Activated CD4-positive, alpha-beta T cell treated with anti-CD3 and anti-CD28 coated beads for 36 hours (primary cell): ENCODE measurements at regions of chr2 and their contacts with region 1.

Region 1: DNA sequence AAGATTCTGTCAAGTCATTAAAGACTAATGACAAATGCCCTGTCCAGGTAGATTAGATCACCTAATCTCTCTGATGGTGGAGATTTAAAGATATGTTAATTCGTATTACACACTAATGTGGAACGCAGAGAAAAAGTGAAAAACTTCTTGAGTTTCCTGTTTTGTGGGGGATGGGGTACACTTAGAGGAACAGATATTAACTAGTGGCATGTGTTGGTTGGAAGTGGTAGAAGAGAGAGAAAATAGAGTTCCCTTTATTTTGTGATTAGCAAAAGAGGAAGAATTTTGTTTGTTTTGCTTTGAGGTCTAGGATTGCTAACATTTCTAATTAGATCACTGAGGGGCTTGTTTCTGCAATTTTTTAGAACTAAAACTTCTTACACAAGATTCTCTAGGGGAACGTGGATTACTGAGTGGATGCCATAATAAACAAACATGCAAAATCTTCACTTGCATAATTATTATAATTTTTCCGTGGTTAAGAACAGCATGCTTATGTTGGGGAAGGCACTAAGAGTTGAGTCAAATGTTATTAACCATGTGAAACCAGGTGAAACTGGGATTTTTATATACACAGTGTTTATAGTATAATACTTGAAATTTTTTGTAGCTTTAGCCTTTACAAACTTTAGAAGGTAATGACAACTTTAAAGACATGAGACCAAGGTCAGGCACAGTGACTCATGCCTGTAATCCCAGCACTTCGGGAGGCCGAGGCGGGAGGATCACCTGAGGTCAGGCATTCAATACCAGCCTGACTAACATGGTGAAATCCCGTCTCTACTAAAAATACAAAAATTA is 97.4 kb upstream of the STK17B start:
- DNase-seq: peak; percentile 46
- ATAC-seq: peak; percentile 37
- H3K4me3 Mint-ChIP-seq: peak overlapping the region; percentile 50
- H3K27ac Mint-ChIP-seq: peak overlapping the region; percentile 89
- H3K4me1 Mint-ChIP-seq: peaks cover 75% of the 10 kb centered on the region
- H3K27me3 Mint-ChIP-seq: no peaks in the 10 kb centered on the region

Region 2: DNA sequence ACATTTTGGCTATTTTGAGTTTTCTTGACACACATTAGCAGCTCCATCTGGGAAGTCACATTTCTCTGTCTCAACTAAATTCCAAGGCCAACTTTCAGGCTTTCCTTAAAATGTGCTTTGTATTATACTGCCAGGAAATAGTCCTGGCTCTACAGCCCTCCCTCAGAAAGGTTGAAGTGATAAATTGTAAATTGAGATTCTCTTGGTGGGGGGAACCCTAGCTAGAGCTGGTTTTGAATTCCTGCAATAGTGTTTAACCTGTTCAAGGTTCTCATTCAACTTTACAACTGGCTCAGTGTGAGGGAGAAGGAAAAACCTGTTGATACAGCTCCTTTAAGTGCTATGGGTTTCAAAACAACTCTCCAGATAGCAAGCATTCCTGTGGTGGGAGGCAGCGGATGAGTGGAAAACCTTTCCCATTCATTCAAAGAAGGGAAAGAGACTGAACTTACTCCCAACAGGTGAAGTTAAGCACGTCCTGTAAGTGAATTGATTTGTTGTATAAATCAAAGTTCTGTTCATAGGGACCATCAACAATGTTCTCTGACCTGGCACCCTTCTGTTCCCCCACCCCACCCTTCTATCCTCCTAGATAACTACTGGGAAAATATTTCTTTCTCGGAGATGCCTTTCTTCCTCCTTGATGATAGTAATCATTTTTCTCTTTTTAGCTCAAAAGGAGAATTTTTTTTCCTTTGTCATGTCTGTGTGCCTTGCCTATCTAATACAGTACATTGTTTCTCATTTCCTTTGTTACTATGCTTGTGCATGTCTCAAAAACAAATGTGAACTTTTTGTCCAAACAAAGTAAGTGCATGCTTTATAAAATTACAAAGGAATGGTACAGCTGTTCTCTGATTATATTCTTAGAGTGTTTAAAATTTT is 655.9 kb before region 1 on chr2:
- CTCF ChIA-PET with region 1: no interaction called
- POLR2A ChIA-PET with region 1: no interaction called
- intact Hi-C with region 1: no loop called
- DNase-seq: no peak
- ATAC-seq: no peak
- H3K4me3 Mint-ChIP-seq: no peak overlapping the region
- H3K27ac Mint-ChIP-seq: no peak overlapping the region
- H3K4me1 Mint-ChIP-seq: peaks cover 19% of the 10 kb centered on the region
- H3K27me3 Mint-ChIP-seq: no peaks in the 10 kb centered on the region

Region 3: GRCh38 chr2:196200557-196200956 is 68.2 kb before region 1 on chr2:
- CTCF ChIA-PET with region 1: no interaction called
- POLR2A ChIA-PET with region 1: no interaction called
- intact Hi-C with region 1: loop called (anchors 2 kb)
- DNase-seq: peak; percentile 65
- ATAC-seq: peak; percentile 92
- H3K4me3 Mint-ChIP-seq: peak overlapping the region; percentile 47
- H3K27ac Mint-ChIP-seq: peak overlapping the region; percentile 90
- H3K4me1 Mint-ChIP-seq: peaks cover 49% of the 10 kb centered on the region
- H3K27me3 Mint-ChIP-seq: no peaks in the 10 kb centered on the region

Region 4: DNA sequence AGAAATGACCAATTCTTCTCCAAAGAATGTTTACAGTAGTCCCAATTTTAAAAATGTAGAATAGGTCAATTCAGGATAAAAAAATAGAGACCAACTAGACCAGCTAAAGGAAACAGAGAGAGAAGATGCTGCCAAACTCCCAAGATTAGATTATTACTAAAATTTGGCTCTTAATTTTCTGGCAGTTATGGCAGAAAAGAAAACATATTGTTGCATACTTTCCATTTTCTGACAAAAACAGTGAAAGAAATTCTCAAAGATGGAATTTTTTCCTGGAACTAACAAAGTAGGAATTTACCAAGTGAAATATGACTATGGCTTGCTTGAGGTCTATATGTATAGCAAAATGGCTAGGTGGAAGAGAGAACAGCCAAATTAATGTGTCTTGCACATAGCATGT is 41.0 kb after region 1 on chr2:
- CTCF ChIA-PET with region 1: no interaction called
- POLR2A ChIA-PET with region 1: no interaction called
- intact Hi-C with region 1: no loop called
- DNase-seq: no peak
- ATAC-seq: no peak
- H3K4me3 Mint-ChIP-seq: no peak overlapping the region
- H3K27ac Mint-ChIP-seq: no peak overlapping the region
- H3K4me1 Mint-ChIP-seq: no peaks in the 10 kb centered on the region
- H3K27me3 Mint-ChIP-seq: peaks cover 3% of the 10 kb centered on the region